Activated CD4-positive, alpha-beta memory T cell treated with anti-CD3 and anti-CD28 coated beads for 36 hours (primary cell): ENCODE measurements at regions of chr6 and their contacts with region 1.

Region 1: GRCh38 chr6:139262519-139263300 is 29.1 kb downstream of the TXLNB start:
- DNase-seq: peak; percentile 53
- H3K4me3 Mint-ChIP-seq: peak overlapping the region; percentile 70
- H3K27ac Mint-ChIP-seq: peak overlapping the region; percentile 89
- H3K4me1 Mint-ChIP-seq: peaks cover 39% of the 10 kb centered on the region
- H3K27me3 Mint-ChIP-seq: no peaks in the 10 kb centered on the region

Region 2: DNA sequence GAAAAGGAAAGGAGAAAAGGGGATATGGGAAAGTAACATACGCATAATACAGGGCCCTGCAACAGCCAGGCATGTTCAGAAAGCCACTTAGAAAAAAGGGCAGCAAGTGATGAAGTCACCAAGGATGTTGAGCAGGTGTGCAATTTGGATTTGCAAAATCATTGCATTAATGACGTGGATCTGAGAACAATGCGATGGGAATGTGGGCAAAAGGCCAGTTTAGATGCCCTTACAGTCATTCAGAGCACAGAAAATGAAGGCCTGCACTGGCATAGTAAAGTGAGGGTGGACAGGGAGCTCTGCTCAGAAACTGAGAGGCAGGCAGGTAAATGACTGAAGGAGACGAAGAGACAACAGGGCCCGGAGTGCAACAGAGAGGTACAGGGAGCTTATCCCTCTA is 639.7 kb before region 1 on chr6:
- CTCF ChIA-PET with region 1: no interaction called
- POLR2A ChIA-PET with region 1: no interaction called
- intact Hi-C with region 1: no loop called
- DNase-seq: no peak
- H3K4me3 Mint-ChIP-seq: no peak overlapping the region
- H3K27ac Mint-ChIP-seq: no peak overlapping the region
- H3K4me1 Mint-ChIP-seq: no peaks in the 10 kb centered on the region
- H3K27me3 Mint-ChIP-seq: no peaks in the 10 kb centered on the region

Region 3: DNA sequence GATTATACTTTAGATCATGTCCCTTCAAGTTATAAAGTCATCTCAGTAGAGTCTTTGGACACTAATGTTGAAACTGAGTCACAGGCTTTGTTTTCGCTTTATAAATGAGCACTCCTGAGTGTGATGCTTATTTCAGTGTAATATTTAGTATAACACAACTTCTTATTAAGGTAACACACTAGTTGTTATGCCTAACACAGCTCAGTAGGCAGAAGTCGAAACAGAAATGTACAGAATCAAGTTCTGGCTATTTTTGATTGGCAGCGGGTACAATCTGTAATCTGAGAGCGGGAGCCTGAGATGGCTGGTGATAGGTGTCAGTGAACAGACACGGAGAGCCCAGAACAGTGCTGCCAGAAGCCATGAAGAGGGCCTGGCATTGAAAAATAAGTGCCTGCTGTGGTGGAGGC is 116.4 kb before region 1 on chr6:
- CTCF ChIA-PET with region 1: no interaction called
- POLR2A ChIA-PET with region 1: interaction called, 7 read pairs
- intact Hi-C with region 1: loop called (anchors 2 kb)
- DNase-seq: peak; percentile 59
- H3K4me3 Mint-ChIP-seq: peak overlapping the region; percentile 72
- H3K27ac Mint-ChIP-seq: peak overlapping the region; percentile 99
- H3K4me1 Mint-ChIP-seq: peaks cover 94% of the 10 kb centered on the region
- H3K27me3 Mint-ChIP-seq: no peaks in the 10 kb centered on the region

Region 4: DNA sequence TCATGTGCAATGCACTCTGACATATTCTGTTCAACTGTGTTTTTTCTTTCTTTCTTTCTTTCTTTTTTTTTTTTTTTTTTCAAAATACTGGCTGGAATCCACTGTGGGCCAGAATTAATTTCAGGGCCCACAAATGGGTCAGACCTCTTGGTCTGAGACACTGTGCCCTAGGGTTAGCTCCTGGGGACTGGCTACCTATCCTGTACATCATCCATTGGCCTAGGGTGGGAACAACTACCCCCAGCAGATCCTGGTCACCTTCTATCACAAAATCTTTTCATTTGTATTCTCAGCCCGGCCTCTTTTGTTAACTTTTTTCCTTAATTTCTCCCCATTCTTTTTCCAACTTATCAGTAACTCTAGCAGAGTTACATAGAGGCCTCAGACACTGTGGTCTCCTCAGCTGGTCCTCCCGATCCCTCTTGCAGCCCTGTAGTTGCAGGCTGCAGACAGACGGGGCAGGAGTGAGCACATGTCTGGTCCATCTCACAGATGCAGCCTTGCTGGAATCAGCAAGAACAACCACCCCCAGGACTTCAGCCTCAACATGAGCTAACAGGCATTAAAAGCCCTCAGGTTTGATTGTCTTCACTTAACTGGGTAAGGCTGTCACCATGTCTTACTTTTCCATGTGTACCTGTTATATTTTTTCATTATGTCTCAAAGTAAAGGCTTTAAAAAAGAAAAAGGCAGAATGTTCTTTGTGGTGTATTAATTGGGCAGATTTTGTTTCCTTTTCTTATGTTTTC is 12.2 kb before region 1 on chr6:
- CTCF ChIA-PET with region 1: interaction called, 10 read pairs
- POLR2A ChIA-PET with region 1: interaction called, 11 read pairs
- intact Hi-C with region 1: loop called (anchors 1 kb)
- DNase-seq: peak; percentile 75
- H3K4me3 Mint-ChIP-seq: no peak overlapping the region
- H3K27ac Mint-ChIP-seq: peak overlapping the region; percentile 73
- H3K4me1 Mint-ChIP-seq: peaks cover 49% of the 10 kb centered on the region
- H3K27me3 Mint-ChIP-seq: no peaks in the 10 kb centered on the region

Region 5: DNA sequence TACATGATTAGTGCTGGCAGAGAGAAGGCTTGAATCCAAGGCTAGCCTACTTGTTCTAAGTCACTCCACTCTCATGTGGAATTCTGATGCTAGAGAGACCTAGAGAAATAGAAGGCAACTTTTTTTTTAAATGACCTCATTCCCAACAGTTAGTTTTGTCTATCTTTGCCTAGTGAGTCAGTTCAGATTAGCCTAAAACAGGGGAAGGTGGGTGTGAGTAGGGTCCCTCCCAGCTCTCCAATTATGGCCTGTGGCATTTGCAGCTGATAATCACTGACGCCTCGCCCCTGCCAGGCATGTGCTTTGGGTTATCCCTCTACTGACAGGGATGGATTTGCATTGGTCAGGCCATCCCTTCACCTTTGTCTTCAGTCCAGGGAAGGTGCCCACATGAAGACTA is 15.5 kb after region 1 on chr6:
- CTCF ChIA-PET with region 1: interaction called, 3 read pairs
- POLR2A ChIA-PET with region 1: interaction called, 4 read pairs
- intact Hi-C with region 1: loop called (anchors 1 kb)
- DNase-seq: no peak
- H3K4me3 Mint-ChIP-seq: no peak overlapping the region
- H3K27ac Mint-ChIP-seq: no peak overlapping the region
- H3K4me1 Mint-ChIP-seq: peaks cover 29% of the 10 kb centered on the region
- H3K27me3 Mint-ChIP-seq: no peaks in the 10 kb centered on the region

Region 6: DNA sequence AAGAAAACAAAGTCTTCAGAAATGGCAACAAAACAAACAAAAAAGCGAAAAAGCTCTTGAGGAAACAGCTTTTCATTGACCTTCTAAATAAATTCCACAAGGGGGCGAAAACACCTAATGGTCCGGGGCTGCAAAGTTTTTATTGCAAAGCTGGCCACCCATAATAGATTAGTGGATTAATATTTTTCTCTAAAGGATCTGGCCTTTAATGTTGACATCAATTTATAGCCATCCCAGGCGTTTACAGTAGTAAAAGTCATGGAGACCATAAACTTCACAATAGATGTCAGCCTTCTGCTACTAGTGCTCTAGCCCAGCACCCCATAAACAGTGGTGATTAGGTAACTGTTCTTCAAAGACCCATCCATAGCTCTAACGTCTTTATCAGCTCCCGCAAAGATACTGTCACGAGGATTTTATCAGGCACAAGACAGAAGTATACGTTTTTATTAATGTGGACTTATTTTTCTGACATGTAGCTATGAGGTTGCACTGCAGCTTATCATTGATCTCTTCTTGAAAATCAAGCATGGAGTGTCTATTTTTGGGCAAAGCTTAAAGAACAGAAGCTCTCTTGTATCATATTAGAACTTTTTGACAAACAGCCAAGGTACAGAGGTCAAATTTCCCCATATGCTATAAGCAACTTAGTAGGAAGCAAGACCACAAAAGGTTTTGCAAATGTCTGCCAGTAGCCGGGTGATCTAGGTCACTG is 107.0 kb after region 1 on chr6:
- CTCF ChIA-PET with region 1: interaction called, 10 read pairs
- POLR2A ChIA-PET with region 1: no interaction called
- intact Hi-C with region 1: no loop called
- DNase-seq: peak; percentile 14
- H3K4me3 Mint-ChIP-seq: peak overlapping the region; percentile 15
- H3K27ac Mint-ChIP-seq: peak overlapping the region; percentile 51
- H3K4me1 Mint-ChIP-seq: peaks cover 39% of the 10 kb centered on the region
- H3K27me3 Mint-ChIP-seq: no peaks in the 10 kb centered on the region